ENCODE measurements at regions of chr14 and their contacts with region 1.

Region 1: GRCh38 chr14:65824285-65824977 is 411.9 kb downstream of the FUT8 start:
- DNase-seq: peak; percentile 60
- ATAC-seq: peak; percentile 57
- H3K4me3 Mint-ChIP-seq: no peak overlapping the region
- H3K27ac Mint-ChIP-seq: no peak overlapping the region
- H3K4me1 Mint-ChIP-seq: peaks cover 33% of the 10 kb centered on the region
- H3K27me3 Mint-ChIP-seq: peaks cover 3% of the 10 kb centered on the region; the same call in 1 of the 2 replicates
- CTCF ChIP-seq: peak; percentile 91

Region 2: DNA sequence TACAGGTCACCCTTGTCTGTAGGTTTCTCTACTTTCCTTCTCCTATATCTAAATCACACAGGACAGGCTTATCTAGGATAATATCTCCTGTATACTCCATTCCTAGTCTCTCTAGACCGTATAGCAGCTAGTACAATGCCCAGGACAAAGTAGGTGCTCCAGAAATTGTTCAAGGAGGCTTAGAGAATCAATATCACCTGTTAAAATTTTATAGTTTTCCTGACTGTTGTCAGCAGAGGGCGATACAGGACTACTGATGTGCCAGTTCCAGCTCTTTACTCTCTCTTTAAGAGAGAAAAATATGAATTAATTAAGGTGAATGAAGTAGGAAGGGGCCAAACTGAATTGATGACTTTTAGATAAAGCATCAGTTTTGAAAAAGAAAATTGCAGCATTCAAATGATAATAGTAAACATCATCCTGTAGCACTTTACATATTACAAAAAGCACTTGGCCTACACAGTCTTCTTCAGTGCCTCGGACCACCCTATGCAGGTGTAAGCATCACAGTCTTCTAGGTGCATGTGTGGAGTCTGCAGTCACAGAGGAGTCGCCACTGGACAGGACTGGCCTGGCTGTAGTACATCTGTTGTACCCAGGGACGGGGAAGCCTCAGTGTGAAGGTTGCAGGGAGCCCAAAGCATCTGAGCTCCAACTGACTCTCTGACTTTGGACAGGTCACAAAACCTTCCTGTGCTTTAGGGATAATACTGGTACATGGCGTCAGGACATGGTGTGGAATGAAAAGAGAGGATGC is 660.2 kb before region 1 on chr14:
- CTCF ChIA-PET with region 1: interaction called, 13 read pairs
- POLR2A ChIA-PET with region 1: no interaction called
- DNase-seq: no peak
- ATAC-seq: peak; percentile 62
- H3K4me3 Mint-ChIP-seq: no peak overlapping the region
- H3K27ac Mint-ChIP-seq: no peak overlapping the region
- H3K4me1 Mint-ChIP-seq: no peaks in the 10 kb centered on the region
- H3K27me3 Mint-ChIP-seq: no peaks in the 10 kb centered on the region; the same call in 1 of the 2 replicates
- CTCF ChIP-seq: peak; percentile 57

Region 3: DNA sequence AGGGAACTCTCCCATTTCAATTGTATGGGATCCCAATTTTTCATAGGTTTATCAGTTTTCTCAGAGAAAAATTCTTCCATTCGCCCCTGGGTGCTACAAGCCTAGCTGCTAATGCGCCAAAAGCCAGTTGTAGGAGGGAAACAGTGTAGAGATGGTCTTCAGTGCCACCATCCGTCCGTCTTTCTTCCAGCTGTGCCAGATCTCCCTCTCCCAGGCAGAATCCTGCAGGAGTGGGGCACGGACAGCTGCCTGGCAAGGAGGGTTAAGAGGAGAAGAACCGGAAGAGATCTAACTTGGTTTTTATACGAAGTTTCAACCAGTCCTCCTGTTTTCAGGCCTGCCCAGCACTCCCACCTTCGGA is 450.8 kb before region 1 on chr14:
- CTCF ChIA-PET with region 1: no interaction called
- POLR2A ChIA-PET with region 1: no interaction called
- DNase-seq: no peak
- ATAC-seq: peak; percentile 16; the same call in 1 of the 2 replicates
- H3K4me3 Mint-ChIP-seq: no peak overlapping the region
- H3K27ac Mint-ChIP-seq: no peak overlapping the region
- H3K4me1 Mint-ChIP-seq: peaks cover 27% of the 10 kb centered on the region
- H3K27me3 Mint-ChIP-seq: no peaks in the 10 kb centered on the region
- CTCF ChIP-seq: no peak

Region 4: DNA sequence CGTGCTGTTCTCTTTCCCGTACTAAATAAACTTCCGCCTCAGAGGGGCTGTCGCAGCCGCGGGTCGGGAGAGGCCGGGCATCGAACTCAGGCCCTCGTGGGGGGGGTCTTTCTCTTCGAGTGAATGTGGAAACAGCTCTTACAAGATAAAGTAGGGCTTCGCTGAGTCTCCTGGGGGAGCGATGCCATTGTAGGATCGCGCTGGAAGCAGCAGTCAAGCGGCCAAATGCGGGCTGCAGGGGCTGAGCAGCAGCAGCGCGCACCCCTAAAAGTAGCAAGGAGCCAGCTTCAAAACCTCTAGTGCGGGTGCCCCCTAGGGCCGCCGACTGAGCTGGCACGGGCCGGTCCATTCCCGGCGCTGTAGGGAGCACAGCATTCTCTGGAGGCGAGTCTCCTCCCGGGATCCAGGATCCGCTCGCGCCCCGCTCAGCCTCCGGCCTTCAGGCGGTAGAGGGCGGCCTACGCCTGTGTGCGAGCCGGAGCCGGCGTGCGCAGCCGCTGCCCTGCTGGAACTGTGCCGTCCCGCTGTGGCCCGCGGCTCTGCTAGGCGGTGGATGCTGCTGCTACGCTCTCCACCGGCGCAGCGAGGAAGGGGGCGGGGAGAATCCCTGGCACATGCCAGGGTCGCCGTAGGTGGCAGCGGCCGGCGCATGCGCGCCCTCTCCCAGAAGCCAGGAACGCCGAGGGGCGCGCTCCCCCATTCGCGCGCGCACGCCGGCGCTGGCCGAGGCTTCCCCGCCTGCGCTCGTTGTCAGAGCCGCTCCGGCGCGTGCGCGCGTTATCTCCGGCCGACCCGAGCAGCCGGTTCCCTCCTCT is 412.2 kb before region 1 on chr14 and contains the start of gene FUT8:
- CTCF ChIA-PET with region 1: interaction called, 48 read pairs
- POLR2A ChIA-PET with region 1: no interaction called
- DNase-seq: peak; percentile 96
- ATAC-seq: peak; percentile 82
- H3K4me3 Mint-ChIP-seq: peak within 1 kb of the TSS; percentile 93
- H3K27ac Mint-ChIP-seq: peak within 1 kb of the TSS; percentile 97
- H3K4me1 Mint-ChIP-seq: peaks cover 25% of the 10 kb centered on the region
- H3K27me3 Mint-ChIP-seq: peaks cover 7% of the 10 kb centered on the region; the same call in 1 of the 2 replicates
- CTCF ChIP-seq: no peak
- total RNA-seq, gene FUT8: 28.6 to 37.9 TPM (median 31.9 TPM) in 3 replicates

Region 5: GRCh38 chr14:65791191-65791981 is 33.0 kb before region 1 on chr14:
- CTCF ChIA-PET with region 1: interaction called, 23 read pairs
- POLR2A ChIA-PET with region 1: no interaction called
- DNase-seq: no peak
- ATAC-seq: peak; percentile 22; the same call in 1 of the 2 replicates
- H3K4me3 Mint-ChIP-seq: no peak overlapping the region
- H3K27ac Mint-ChIP-seq: no peak overlapping the region
- H3K4me1 Mint-ChIP-seq: no peaks in the 10 kb centered on the region
- H3K27me3 Mint-ChIP-seq: no peaks in the 10 kb centered on the region
- CTCF ChIP-seq: no peak

Region 6: GRCh38 chr14:65810322-65810721 is 14.1 kb before region 1 on chr14:
- CTCF ChIA-PET with region 1: interaction called, 50 read pairs
- POLR2A ChIA-PET with region 1: no interaction called
- DNase-seq: no peak
- ATAC-seq: no peak
- H3K4me3 Mint-ChIP-seq: no peak overlapping the region
- H3K27ac Mint-ChIP-seq: no peak overlapping the region
- H3K4me1 Mint-ChIP-seq: peaks cover 41% of the 10 kb centered on the region
- H3K27me3 Mint-ChIP-seq: no peaks in the 10 kb centered on the region
- CTCF ChIP-seq: no peak